ENCODE measurements at regions of chr3 and their contacts with region 1.

Region 1: DNA sequence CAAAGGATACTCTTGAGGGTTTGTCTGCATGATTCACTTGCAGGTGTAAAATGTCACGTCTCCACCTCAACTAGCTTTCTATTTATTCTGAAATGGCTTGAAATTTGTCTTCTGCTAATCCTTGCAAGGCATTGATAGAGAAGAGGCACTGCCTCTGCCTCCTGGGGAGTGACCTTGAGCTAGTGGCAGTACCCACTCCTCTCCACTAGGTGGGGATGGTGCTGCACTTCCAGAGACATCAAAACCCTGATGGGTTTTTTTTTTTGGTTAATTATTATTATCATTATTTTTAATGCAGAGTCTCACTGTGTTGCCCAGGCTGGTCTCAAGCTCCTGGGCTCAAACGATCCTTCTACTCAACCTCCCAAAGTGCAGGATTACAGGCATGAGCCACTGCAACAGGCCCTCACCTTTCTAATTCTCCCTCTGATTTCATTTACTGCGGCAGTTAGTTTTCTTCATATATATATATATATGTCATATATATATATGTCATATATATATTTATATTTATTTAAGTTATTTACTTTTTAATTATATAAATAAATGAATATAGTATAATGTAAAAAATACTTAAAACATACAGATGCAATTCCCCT is 117.6 kb upstream of the EIF1B start:
- DNase-seq: peak; percentile 35
- H3K4me3 ChIP-seq: no peak overlapping the region
- H3K27ac ChIP-seq: no peak overlapping the region
- H3K4me1 ChIP-seq: no peaks in the 10 kb centered on the region
- H3K27me3 ChIP-seq: peaks cover 2% of the 10 kb centered on the region
- CTCF ChIP-seq: peak; percentile 94 to 95

Region 2: DNA sequence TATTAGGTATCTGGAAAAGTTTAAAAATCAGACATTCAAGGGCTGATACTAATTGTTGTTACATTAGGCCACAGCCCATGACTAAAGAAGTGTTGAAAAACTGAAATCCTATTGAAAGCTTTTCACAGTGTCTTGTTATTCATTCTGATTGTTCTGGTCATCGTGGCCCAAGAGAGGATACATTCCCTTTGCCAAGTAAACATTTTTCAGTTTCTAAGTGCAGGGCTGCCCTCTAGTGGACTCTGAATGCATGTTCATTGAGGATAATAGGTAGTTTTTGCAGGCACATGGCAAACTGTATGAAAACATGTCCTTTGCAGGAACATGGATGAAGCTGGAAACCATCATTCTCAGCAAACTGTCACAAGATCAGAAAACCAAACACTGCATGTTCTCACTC is 201.4 kb before region 1 on chr3:
- CTCF ChIA-PET with region 1: no interaction called
- dilution Hi-C with region 1: no loop called
- in situ Hi-C with region 1: no loop called
- intact Hi-C with region 1: no loop called
- DNase-seq: peak; percentile 55
- H3K4me3 ChIP-seq: no peak overlapping the region
- H3K27ac ChIP-seq: no peak overlapping the region
- H3K4me1 ChIP-seq: no peaks in the 10 kb centered on the region
- H3K27me3 ChIP-seq: no peaks in the 10 kb centered on the region
- CTCF ChIP-seq: peak; percentile 72 to 73

Region 3: GRCh38 chr3:40079203-40079846 is 112.6 kb before region 1 on chr3:
- CTCF ChIA-PET with region 1: no interaction called
- dilution Hi-C with region 1: no loop called
- in situ Hi-C with region 1: no loop called
- intact Hi-C with region 1: no loop called
- DNase-seq: peak; percentile 43
- H3K4me3 ChIP-seq: no peak overlapping the region
- H3K27ac ChIP-seq: no peak overlapping the region
- H3K4me1 ChIP-seq: peaks cover 18% of the 10 kb centered on the region
- H3K27me3 ChIP-seq: no peaks in the 10 kb centered on the region
- CTCF ChIP-seq: no peak

Region 4: DNA sequence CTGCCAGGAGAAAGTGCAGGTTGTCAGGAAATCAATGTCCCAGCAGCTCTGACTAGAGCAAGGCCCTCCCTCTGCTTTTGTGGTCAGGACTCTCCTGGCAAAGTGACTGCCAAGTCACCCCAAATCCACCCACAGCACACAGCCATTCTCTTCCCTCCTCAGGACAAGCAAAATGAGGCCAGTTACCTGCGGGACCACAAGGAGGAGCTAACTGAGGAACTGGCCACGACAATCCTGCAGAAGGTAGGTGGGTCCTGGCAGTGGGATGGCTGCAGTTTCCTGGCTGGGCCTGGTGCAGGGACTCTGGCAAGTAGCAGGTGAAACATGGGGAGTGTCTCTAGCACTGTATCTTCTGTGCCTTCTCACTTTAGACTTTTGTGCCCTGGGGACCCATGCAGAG is 25.0 kb before region 1 on chr3:
- CTCF ChIA-PET with region 1: no interaction called
- dilution Hi-C with region 1: no loop called
- in situ Hi-C with region 1: no loop called
- intact Hi-C with region 1: no loop called
- DNase-seq: no peak
- H3K4me3 ChIP-seq: no peak overlapping the region
- H3K27ac ChIP-seq: no peak overlapping the region
- H3K4me1 ChIP-seq: no peaks in the 10 kb centered on the region
- H3K27me3 ChIP-seq: no peaks in the 10 kb centered on the region
- CTCF ChIP-seq: no peak

Region 5: DNA sequence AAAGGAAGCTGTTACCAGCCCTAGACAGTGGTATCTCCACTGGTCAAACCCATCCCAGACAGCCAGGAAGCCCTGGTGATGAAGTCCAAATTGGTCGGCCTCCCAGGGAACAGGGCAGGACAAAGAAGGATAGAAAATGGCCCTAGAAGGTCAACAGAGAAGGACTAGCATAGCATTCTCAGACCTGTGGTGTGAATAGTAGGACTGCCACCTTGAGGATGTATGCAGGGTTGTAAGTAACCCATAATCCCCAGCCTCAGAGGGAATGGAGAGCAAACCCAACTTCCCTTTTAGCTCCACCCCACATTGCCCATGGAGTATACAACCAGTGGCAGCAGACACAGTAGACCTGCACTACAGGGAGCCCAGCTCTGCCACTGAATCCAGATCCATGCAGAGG is 49.0 kb after region 1 on chr3:
- CTCF ChIA-PET with region 1: no interaction called
- dilution Hi-C with region 1: no loop called
- in situ Hi-C with region 1: no loop called
- intact Hi-C with region 1: loop called (anchors 5 kb)
- DNase-seq: no peak
- H3K4me3 ChIP-seq: no peak overlapping the region
- H3K27ac ChIP-seq: no peak overlapping the region
- H3K4me1 ChIP-seq: no peaks in the 10 kb centered on the region
- H3K27me3 ChIP-seq: peaks cover 2% of the 10 kb centered on the region
- CTCF ChIP-seq: no peak

Region 6: GRCh38 chr3:40309418-40309924 is 117.5 kb after region 1 on chr3 and contains the start of gene EIF1B:
- CTCF ChIA-PET with region 1: interaction called, 10 read pairs
- dilution Hi-C with region 1: no loop called
- in situ Hi-C with region 1: loop called in 1 of 2 experiments (anchors 5 kb)
- intact Hi-C with region 1: loop called (anchors 2 kb)
- DNase-seq: peak; percentile 96
- H3K4me3 ChIP-seq: peak within 1 kb of the TSS; percentile 70 to 100 (median 90)
- H3K27ac ChIP-seq: peak within 1 kb of the TSS; percentile 85
- H3K4me1 ChIP-seq: peaks cover 7% of the 10 kb centered on the region
- H3K27me3 ChIP-seq: no peaks in the 10 kb centered on the region
- CTCF ChIP-seq: peak; percentile 55 to 93
- total RNA-seq, gene EIF1B: 11.5 to 43.0 TPM

Region 7: DNA sequence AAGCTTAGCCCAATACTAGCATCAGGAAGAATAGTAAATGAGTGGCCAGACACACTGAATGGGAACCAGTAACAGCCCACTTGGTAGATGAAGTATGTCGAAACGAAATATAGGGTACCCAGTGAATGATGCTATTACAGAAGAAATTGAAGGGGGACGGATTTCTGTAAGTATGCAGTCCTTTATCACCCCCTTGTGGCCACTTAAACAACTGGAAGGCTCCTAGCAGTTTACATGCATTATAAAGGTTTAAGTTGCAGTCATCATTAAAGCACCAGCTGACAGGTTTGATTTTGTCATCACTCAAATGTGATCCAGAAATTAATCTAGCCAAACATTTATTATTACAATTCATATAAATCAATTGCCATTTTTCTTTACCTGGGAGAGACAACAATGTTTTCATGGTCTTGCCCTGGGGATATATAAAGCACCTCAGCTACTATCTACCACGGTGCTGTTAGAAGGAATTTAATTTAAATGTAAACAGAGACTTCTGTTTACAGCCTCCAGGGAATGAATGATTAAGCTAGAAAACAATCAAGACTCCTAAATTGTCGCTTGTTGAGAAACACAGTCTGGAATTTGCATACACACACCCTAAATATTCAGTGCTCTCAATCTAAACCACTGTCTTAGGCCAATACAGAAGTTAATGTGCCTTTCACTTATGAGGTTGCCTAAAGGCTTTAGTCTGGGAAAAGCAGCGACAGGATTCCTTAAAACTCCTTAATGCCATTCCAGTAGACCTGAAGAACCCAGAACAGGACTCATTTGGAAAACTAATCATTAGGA is 125.3 kb after region 1 on chr3:
- CTCF ChIA-PET with region 1: interaction called, 10 read pairs
- dilution Hi-C with region 1: no loop called
- in situ Hi-C with region 1: loop called (anchors 5 kb)
- intact Hi-C with region 1: loop called (anchors 1 kb)
- DNase-seq: peak; percentile 29
- H3K4me3 ChIP-seq: no peak overlapping the region
- H3K27ac ChIP-seq: no peak overlapping the region
- H3K4me1 ChIP-seq: no peaks in the 10 kb centered on the region
- H3K27me3 ChIP-seq: no peaks in the 10 kb centered on the region
- CTCF ChIP-seq: peak; percentile 80 to 82

Region 8: DNA sequence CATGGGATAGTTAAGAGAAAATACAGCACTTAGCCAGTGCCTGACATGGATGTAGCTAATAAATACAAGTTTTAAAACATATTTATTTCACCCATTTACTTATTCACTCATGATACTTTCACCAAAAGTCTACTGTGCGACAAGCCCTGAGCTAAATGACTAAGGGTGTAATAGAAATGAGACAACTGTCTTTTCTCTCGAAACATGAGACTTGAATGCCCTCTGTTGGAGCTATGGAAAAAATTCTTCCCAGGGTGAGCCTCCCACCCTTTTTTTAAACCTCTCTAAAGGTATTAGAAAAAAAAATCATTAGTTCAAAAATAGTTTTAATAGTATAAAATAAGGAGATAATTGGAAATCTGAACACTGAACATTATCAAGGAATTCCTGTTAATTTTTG is 240.8 kb after region 1 on chr3:
- CTCF ChIA-PET with region 1: no interaction called
- dilution Hi-C with region 1: no loop called
- in situ Hi-C with region 1: loop called in 1 of 2 experiments (anchors 25 kb)
- intact Hi-C with region 1: loop called (anchors 5 kb)
- DNase-seq: peak; percentile 6
- H3K4me3 ChIP-seq: no peak overlapping the region
- H3K27ac ChIP-seq: no peak overlapping the region
- H3K4me1 ChIP-seq: no peaks in the 10 kb centered on the region
- H3K27me3 ChIP-seq: peaks cover 2% of the 10 kb centered on the region
- CTCF ChIP-seq: peak in 1 of 2 donors; percentile 35

Region 9: GRCh38 chr3:41881233-41881821 is 1689.4 kb after region 1 on chr3:
- CTCF ChIA-PET with region 1: no interaction called
- dilution Hi-C with region 1: no loop called
- in situ Hi-C with region 1: no loop called
- intact Hi-C with region 1: loop called (anchors 10 kb)
- DNase-seq: peak; percentile 29
- H3K4me3 ChIP-seq: no peak overlapping the region
- H3K27ac ChIP-seq: no peak overlapping the region
- H3K4me1 ChIP-seq: no peaks in the 10 kb centered on the region
- H3K27me3 ChIP-seq: no peaks in the 10 kb centered on the region
- CTCF ChIP-seq: peak; percentile 54 to 55